ENCODE measurements at regions of chr12 and their contacts with region 1.

Region 1: DNA sequence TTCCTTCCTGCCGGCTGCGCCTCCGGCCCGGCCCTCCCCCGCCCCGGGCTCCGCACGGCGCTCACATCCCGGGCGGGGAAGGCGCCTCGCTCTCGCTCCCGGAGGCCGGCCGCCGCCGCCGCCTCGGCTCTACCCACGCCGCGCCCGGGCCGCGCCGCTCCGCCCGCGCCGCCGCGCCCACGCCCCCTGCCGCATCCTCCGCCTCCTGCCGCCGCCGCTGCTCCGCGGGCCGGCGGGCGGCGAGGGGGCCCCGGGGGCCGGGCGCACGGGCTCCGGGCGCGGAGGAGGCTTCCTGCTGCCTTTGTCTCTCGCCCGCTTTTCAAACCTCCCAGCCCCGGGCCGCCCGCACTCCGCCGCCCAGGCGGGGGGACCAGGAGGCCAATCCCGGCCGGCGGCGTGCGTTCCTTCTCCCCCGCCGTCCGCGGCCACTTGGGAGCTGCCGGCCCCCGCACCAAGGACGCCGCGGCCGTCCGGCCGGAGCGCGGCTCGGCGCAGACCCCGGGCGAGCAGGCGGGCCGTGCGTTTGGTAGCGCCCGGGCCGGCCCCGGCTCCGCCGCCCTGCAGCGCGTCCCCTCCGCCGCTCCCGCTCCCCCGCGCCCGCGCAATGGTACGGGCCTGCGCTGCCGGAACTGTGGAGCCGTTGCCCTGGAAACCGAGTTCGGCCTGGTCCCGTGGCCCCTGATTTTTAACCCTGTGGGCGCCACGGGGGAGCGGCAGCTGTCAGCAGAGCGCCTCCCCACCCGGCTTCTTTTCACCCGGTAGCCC is at the start of gene FBXL14:
- DNase-seq: peak; percentile 91
- H3K4me3 Mint-ChIP-seq: peak within 1 kb of the TSS; percentile 94
- H3K27ac Mint-ChIP-seq: peak within 1 kb of the TSS; percentile 91
- H3K4me1 Mint-ChIP-seq: peaks cover 31% of the 10 kb centered on the region
- H3K27me3 Mint-ChIP-seq: no peaks in the 10 kb centered on the region
- total RNA-seq, gene FBXL14: 13.5 to 14.4 TPM

Region 2: DNA sequence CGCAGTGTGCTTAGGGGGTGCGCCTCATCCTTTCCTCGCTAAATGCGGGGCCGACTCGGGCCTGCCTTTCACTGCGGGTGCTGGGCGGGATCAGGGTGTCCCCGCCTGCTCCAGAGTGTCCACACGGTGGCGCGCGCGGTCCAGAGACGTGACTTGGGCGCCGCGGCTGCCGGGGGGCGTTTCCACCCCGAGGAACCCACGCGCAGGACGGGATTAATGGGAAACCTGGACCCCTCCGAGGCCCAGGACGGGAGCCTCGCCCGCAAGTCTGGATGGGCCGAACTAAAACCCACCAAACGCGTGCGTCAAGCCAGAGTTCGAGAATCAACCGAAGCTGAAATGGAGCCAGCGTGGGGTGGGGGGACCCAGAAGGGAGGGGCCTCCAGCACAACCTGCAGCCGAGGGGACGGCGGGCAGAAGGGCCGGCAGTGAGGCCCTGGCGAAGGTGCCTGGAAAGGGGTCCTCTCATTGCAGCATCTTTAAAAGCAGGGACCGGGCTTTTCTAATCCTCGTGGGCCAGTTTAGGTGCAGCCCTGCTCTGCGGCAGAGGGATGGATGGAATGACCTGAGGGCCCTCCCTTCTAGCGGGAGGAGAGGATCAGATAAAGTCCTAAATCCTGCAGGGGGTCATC is 1024.5 kb before region 1 on chr12:
- CTCF ChIA-PET with region 1: no interaction called
- POLR2A ChIA-PET with region 1: no interaction called
- intact Hi-C with region 1: loop called (anchors 10 kb)
- DNase-seq: peak; percentile 90
- H3K4me3 Mint-ChIP-seq: peak overlapping the region; percentile 79
- H3K27ac Mint-ChIP-seq: no peak overlapping the region
- H3K4me1 Mint-ChIP-seq: peaks cover 48% of the 10 kb centered on the region
- H3K27me3 Mint-ChIP-seq: no peaks in the 10 kb centered on the region

Region 3: DNA sequence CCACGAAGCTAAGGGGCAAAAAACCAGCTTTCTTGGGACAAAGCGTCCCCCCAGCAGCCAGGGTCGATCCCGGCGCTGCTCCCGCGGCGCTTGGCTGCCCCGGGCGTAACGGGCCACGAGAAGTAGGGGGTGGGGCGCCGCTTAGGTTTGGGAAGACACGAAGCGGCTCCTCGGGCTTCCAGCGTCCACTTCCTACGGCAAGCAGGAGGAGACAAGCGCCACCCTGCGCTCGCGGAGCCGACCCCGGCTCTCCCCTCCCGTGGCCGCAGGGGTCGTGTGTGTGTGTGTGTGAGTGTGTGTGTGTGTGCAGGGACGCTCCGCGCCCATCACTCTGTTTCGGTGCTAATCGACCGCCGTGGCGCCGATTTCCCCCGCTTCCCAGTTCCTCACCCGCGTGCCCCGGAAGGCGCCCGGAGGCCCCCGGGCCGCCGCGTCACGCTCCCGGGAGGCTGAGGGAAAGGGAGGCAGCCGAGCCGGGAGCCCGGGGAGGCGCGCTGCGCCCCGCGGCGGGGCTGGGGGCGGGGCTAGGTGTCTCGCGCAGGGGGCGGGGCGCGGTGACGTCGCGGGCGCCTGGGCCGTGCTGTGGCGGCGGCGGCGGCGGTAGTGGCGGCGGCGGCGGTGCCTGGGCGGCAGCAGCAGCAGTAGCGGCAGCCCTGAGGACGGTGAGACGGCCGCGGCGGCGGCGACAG is 603.6 kb before region 1 on chr12 and contains the start of gene ERC1:
- CTCF ChIA-PET with region 1: no interaction called
- POLR2A ChIA-PET with region 1: no interaction called
- intact Hi-C with region 1: loop called (anchors 5 kb)
- DNase-seq: peak; percentile 87
- H3K4me3 Mint-ChIP-seq: peak within 1 kb of the TSS; percentile 94
- H3K27ac Mint-ChIP-seq: peak within 1 kb of the TSS; percentile 87
- H3K4me1 Mint-ChIP-seq: peaks cover 35% of the 10 kb centered on the region
- H3K27me3 Mint-ChIP-seq: no peaks in the 10 kb centered on the region
- total RNA-seq, gene ERC1: 19.1 to 21.8 TPM

Region 4: GRCh38 chr12:1453810-1454209 is 140.6 kb before region 1 on chr12:
- CTCF ChIA-PET with region 1: no interaction called
- POLR2A ChIA-PET with region 1: no interaction called
- intact Hi-C with region 1: no loop called
- DNase-seq: no peak
- H3K4me3 Mint-ChIP-seq: no peak overlapping the region
- H3K27ac Mint-ChIP-seq: no peak overlapping the region
- H3K4me1 Mint-ChIP-seq: no peaks in the 10 kb centered on the region
- H3K27me3 Mint-ChIP-seq: no peaks in the 10 kb centered on the region

Region 5: DNA sequence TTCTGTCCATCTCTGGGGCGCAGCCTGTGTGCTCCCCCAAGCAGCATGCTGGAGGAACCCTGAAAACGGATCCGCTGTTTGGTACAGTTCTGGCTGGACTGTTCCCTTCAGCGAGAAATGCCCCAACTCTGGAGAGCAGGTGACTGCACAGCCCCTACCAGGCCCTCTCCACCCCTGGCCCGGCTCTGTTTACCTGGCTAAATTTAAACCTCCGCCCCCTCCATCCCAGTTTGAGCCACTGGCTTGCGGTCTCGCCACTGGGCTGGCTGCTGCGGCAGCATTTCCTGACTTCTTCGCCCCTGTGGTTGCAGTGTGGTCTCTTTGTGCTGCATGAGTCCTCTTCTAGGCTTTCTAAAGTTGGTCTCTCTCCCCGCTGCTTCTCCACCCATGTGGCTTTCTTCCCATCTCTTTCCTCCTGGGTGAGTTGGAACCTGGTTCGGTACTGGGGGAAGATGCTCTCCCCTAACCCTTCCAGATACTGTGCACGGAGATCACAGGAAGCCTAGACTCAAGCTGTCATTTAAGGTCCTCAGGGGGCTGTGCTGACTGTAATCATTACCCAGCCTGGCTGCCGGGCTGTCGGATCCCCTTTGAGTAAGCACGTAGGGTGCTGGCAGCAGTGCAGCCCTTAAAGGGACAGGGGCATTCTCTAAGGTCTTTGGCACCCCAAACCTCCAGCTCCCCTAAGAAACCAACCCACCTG is 60.7 kb before region 1 on chr12:
- CTCF ChIA-PET with region 1: interaction called, 4 read pairs
- POLR2A ChIA-PET with region 1: interaction called, 3 read pairs
- intact Hi-C with region 1: loop called (anchors 5 kb)
- DNase-seq: peak; percentile 85
- H3K4me3 Mint-ChIP-seq: peak overlapping the region; percentile 45
- H3K27ac Mint-ChIP-seq: no peak overlapping the region
- H3K4me1 Mint-ChIP-seq: peaks cover 29% of the 10 kb centered on the region
- H3K27me3 Mint-ChIP-seq: peaks cover 62% of the 10 kb centered on the region

Region 6: GRCh38 chr12:1583421-1584078 is 10.9 kb before region 1 on chr12:
- CTCF ChIA-PET with region 1: interaction called, 27 read pairs
- POLR2A ChIA-PET with region 1: interaction called, 5 read pairs
- intact Hi-C with region 1: no loop called
- DNase-seq: peak; percentile 75
- H3K4me3 Mint-ChIP-seq: no peak overlapping the region
- H3K27ac Mint-ChIP-seq: no peak overlapping the region
- H3K4me1 Mint-ChIP-seq: peaks cover 17% of the 10 kb centered on the region
- H3K27me3 Mint-ChIP-seq: no peaks in the 10 kb centered on the region

Region 7: DNA sequence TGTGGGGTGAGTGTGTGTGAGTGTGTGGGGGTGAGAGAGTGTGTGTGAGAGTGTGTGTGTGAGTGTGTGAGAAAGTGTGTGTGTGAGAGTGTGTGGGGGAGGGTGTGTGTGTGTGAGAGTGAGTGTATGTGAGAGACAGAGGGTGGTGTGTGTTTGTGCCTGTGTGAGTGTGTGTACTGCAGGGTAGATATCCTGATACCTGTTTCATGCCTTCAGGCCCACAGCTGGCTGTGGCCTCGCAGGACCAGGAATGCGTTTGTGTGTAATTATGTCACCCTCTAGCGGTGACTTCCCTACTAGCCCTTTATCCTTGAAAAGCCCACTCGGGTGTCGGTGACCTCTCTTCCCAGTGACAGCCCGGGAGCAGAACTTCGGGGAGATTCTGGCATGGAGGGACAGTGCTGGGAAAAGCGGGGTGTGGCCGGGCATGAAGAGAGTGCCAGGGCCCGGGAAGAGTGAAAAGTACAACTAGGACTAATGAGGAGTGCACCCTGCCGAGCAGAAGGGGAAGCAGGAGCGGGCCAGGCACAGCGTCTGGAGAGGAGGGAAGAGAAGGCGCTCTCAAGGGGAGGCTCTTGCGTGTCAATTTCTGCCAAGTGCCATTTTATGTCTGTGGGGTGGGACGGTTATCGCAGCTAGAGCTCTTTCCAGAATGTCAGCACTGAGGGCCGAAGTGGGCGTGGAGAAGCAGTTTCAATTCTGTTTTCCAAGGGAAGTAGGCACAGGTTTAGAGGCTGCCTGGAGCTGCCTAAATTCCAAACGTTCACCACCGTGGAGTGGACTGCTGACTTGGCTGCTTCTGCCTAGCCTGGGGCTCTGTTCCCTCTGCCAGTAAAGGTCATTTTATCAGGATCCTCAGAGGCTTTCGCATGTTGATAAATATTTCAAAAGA is 10.9 kb after region 1 on chr12:
- CTCF ChIA-PET with region 1: interaction called, 8 read pairs
- POLR2A ChIA-PET with region 1: interaction called, 24 read pairs
- intact Hi-C with region 1: loop called (anchors 1 kb)
- DNase-seq: peak; percentile 67
- H3K4me3 Mint-ChIP-seq: peak overlapping the region; percentile 74
- H3K27ac Mint-ChIP-seq: peak overlapping the region; percentile 25
- H3K4me1 Mint-ChIP-seq: peaks cover 30% of the 10 kb centered on the region
- H3K27me3 Mint-ChIP-seq: no peaks in the 10 kb centered on the region